Spleen (tissue), 13 donors: ENCODE measurements at regions of chr6 and their contacts with region 1.

Region 1: DNA sequence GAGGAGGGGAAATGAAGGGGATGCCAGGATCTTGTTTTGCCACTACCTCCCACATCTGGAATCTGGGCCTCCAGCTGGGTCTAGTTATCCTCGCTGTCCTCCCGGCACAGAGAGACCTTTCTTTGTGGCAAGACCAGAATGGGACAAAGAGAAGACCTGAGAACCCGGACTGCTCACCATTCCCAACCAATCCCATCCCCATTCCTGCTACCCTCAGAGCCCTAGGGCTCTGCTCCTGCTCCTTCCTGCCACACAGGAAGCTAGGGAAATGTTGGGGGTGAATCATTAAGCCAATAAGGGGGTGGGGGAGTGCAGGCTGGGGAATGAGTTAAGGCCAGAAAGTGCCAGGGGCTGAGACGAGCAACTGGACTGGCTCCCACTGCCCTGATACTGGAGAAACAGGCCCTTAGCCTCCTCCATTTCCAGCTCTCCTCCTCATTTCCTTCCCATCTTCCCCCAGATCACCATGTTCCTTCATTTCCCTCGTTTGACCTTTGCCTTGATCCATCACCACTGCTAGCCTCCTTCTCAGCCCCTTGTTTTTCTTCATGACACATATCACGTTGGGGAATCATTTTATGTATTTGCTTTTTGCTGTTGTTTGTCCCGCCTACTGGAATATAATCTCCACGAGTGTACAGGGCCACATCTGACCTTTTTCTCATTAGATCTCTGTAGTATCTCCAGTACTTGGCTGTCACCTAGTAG is 4.7 kb upstream of the IER3 start:
- DNase-seq: no peak
- H3K4me3 ChIP-seq: no peak overlapping the region
- H3K27ac ChIP-seq: peak overlapping the region in 7 of 8 donors; percentile 29 to 68 (median 57)
- H3K4me1 ChIP-seq: peaks cover 10 to 66% (median 16%) of the 10 kb centered on the region in 6 donors
- H3K27me3 ChIP-seq: no peaks in the 10 kb centered on the region
- CTCF ChIP-seq: no peak
- POLR2A ChIP-seq: no peak

Region 2: GRCh38 chr6:30877419-30878371 is 128.7 kb after region 1 on chr6:
- intact Hi-C with region 1: loop called (anchors 5 kb)
- DNase-seq: peak; percentile 93
- H3K4me3 ChIP-seq: peak overlapping the region in 7 of 8 donors; percentile 6 to 52 (median 16)
- H3K27ac ChIP-seq: peak overlapping the region; percentile 69 to 85 (median 80)
- H3K4me1 ChIP-seq: peaks cover 10 to 44% (median 26%) of the 10 kb centered on the region in 6 donors
- H3K27me3 ChIP-seq: no peaks in the 10 kb centered on the region
- CTCF ChIP-seq: peak; percentile 68 to 94 (median 84)
- POLR2A ChIP-seq: no peak